Activated CD4-positive, alpha-beta T cell treated with anti-CD3 and anti-CD28 coated beads for 36 hours (primary cell): ENCODE measurements at regions of chr19 and their contacts with region 1.

Region 1: GRCh38 chr19:32599736-32600157 is 18.8 kb downstream of the PDCD5 start:
- DNase-seq: peak; percentile 62
- ATAC-seq: peak; percentile 66
- H3K4me3 Mint-ChIP-seq: no peak overlapping the region
- H3K27ac Mint-ChIP-seq: no peak overlapping the region
- H3K4me1 Mint-ChIP-seq: peaks cover 7% of the 10 kb centered on the region
- H3K27me3 Mint-ChIP-seq: no peaks in the 10 kb centered on the region

Region 2: DNA sequence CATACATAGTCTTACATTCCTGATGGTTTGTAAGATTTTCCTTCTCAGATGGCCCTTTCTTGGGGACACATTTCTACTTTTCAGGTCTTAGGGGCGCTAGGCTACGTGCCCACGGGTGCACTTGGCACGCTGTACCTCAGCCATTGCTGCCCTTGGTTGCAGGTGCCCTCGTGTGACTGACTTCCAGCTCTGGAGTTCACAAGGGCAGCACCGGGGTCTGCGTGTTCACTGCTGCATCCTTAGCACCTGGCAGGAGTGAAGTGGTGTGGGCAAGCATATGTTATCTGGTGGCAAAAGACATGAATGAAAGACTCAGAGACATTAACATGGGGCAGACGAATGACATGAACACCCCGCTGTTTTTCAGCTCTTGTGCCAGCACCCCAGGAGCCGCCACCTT is 518.9 kb after region 1 on chr19:
- CTCF ChIA-PET with region 1: no interaction called
- POLR2A ChIA-PET with region 1: no interaction called
- intact Hi-C with region 1: loop called in 1 of 2 experiments (anchors 5 kb)
- DNase-seq: no peak
- ATAC-seq: no peak
- H3K4me3 Mint-ChIP-seq: no peak overlapping the region
- H3K27ac Mint-ChIP-seq: no peak overlapping the region
- H3K4me1 Mint-ChIP-seq: no peaks in the 10 kb centered on the region
- H3K27me3 Mint-ChIP-seq: no peaks in the 10 kb centered on the region